ENCODE measurements at regions of chr12 and their contacts with region 1.

Region 1: GRCh38 chr12:5022465-5023061 is 21.1 kb upstream of the KCNA5 start:
- DNase-seq: peak; percentile 28
- ATAC-seq: peak; percentile 77
- H3K4me3 ChIP-seq: no peak overlapping the region
- H3K27ac ChIP-seq: no peak overlapping the region
- H3K4me1 ChIP-seq: no peaks in the 10 kb centered on the region
- H3K27me3 ChIP-seq: peaks cover 3 to 14% of the 10 kb centered on the region in 2 experiments; a peak in 1 of 5 replicates
- CTCF ChIP-seq: peak; percentile 87
- EP300 ChIP-seq: no peak
- POLR2A ChIP-seq: no peak
- RAD21 ChIP-seq: peak; percentile 53; the same call in 1 of the 2 replicates

Region 2: DNA sequence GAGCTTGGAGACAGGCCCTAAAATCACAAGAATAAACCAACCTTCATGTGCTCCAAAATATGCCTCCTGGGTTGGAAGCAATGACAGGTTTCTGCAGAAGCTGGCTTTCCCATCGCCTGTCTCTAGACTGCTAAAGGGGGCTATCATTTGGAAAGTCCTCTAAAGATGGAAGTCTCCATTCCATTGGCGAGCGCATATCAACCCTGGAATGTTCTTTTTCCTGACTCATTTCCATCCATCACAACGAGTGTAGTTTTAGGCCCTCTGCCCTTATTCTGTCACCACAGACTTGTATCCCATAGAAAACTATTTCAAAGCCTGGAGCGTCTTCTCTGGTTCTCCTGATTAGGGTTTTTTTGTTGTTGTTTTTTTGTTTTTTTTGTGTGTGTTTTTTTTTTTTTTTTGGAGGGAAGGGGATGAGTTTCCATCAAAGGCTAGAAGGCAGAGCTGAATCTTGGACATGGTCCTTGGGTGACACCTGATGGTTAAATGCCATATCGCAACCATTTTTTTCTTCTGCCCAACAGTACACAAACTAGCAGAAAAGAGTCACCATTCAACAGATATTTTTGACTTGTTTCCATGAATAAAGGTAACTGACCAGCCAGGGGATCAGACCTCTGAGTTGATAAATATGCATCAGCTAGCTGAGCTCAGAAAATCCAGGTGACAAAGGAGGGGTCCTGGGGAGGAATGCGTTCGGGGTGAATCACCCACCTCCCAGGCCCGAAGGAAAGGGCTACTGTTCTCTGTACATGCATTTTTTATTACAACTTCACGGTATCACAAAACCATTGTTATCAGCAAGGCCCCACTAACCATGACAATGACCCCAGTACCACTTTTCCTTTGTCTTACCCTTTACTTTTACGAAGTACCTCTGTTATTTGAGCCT is 61.6 kb after region 1 on chr12:
- CTCF ChIA-PET with region 1: interaction called, 25 read pairs
- POLR2A ChIA-PET with region 1: no interaction called
- in situ Hi-C with region 1: loop called (anchors 5 kb)
- intact Hi-C with region 1: loop called (anchors 1 kb)
- DNase-seq: peak; percentile 24
- ATAC-seq: peak; percentile 59; the same call in 2 of the 3 replicates
- H3K4me3 ChIP-seq: no peak overlapping the region
- H3K27ac ChIP-seq: no peak overlapping the region
- H3K4me1 ChIP-seq: no peaks in the 10 kb centered on the region
- H3K27me3 ChIP-seq: peaks cover 2 to 10% of the 10 kb centered on the region in 2 experiments; a peak in 2 of 5 replicates
- CTCF ChIP-seq: peak; percentile 68
- EP300 ChIP-seq: no peak
- POLR2A ChIP-seq: no peak
- RAD21 ChIP-seq: no peak

Region 3: GRCh38 chr12:5442251-5443006 is 419.9 kb after region 1 on chr12:
- CTCF ChIA-PET with region 1: no interaction called
- POLR2A ChIA-PET with region 1: no interaction called
- in situ Hi-C with region 1: loop called (anchors 5 kb)
- intact Hi-C with region 1: no loop called
- DNase-seq: peak; percentile 34
- ATAC-seq: peak; percentile 76
- H3K4me3 ChIP-seq: no peak overlapping the region
- H3K27ac ChIP-seq: no peak overlapping the region
- H3K4me1 ChIP-seq: no peaks in the 10 kb centered on the region
- H3K27me3 ChIP-seq: peaks cover 0 to 8% of the 10 kb centered on the region in 2 experiments; a peak in 2 of 5 replicates
- CTCF ChIP-seq: peak; percentile 53
- EP300 ChIP-seq: no peak
- POLR2A ChIP-seq: no peak
- RAD21 ChIP-seq: 0 out of 2 replicates have a peak, but pooled peaks have one; percentile 25

Region 4: GRCh38 chr12:5796171-5796958 is 773.8 kb after region 1 on chr12:
- CTCF ChIA-PET with region 1: no interaction called
- POLR2A ChIA-PET with region 1: no interaction called
- in situ Hi-C with region 1: no loop called
- intact Hi-C with region 1: loop called (anchors 5 kb)
- DNase-seq: peak; percentile 5
- ATAC-seq: peak; percentile 98
- H3K4me3 ChIP-seq: no peak overlapping the region
- H3K27ac ChIP-seq: no peak overlapping the region
- H3K4me1 ChIP-seq: no peaks in the 10 kb centered on the region
- H3K27me3 ChIP-seq: peaks cover 1 to 6% of the 10 kb centered on the region in 2 experiments; a peak in 2 of 5 replicates
- CTCF ChIP-seq: peak; percentile 88
- EP300 ChIP-seq: no peak
- POLR2A ChIP-seq: no peak
- RAD21 ChIP-seq: peak; percentile 77

Measured in HepG2 (cell line).